ENCODE measurements at regions of chr2 and their contacts with region 1.

Region 1: GRCh38 chr2:173402405-173402974 is 47.8 kb downstream of the CDCA7 start:
- DNase-seq: peak; percentile 85
- H3K4me3 Mint-ChIP-seq: no peak overlapping the region
- H3K27ac Mint-ChIP-seq: no peak overlapping the region
- H3K4me1 Mint-ChIP-seq: peaks cover 6% of the 10 kb centered on the region
- H3K27me3 Mint-ChIP-seq: peaks cover 53% of the 10 kb centered on the region

Region 2: DNA sequence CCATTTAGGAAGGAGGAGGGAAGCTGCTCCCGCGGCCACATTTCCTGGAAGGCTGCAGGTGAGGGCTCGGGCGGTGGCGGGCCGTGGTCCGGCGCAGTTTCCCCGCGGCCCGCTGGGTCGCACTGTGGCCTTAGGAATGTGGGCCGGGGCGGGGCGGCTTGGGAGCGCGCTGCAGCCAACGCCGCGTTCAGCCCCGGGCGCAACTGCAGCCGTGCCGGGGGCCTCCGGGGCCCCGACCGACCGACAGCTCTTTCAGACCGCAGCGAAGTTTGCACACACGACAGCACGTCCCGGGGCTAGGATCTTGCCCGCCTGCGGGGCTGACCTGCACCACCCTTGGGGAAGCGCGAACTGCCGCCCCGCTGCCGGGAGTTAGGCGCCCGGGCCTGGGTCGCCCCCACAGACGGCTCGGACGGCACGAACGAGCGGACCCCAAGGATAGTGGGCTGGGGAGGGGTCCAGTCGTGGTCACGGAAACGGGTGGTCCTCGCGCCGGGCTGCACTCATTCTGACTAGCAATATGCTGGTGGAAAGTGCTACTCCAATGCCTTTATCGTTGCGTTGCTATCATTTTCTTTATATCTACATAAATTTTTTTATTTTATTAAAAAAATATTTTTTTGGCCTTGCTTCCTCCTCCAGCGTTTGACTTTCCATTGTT is 1229.8 kb before region 1 on chr2:
- CTCF ChIA-PET with region 1: no interaction called
- intact Hi-C with region 1: no loop called
- DNase-seq: peak; percentile 72
- H3K4me3 Mint-ChIP-seq: peak overlapping the region; percentile 68
- H3K27ac Mint-ChIP-seq: no peak overlapping the region
- H3K4me1 Mint-ChIP-seq: peaks cover 5% of the 10 kb centered on the region
- H3K27me3 Mint-ChIP-seq: no peaks in the 10 kb centered on the region

Region 3: GRCh38 chr2:172762574-172762973 is 639.9 kb before region 1 on chr2:
- CTCF ChIA-PET with region 1: no interaction called
- intact Hi-C with region 1: no loop called
- DNase-seq: no peak
- H3K4me3 Mint-ChIP-seq: no peak overlapping the region
- H3K27ac Mint-ChIP-seq: no peak overlapping the region
- H3K4me1 Mint-ChIP-seq: no peaks in the 10 kb centered on the region
- H3K27me3 Mint-ChIP-seq: no peaks in the 10 kb centered on the region

Region 4: GRCh38 chr2:173027181-173028128 is 375.0 kb before region 1 on chr2:
- CTCF ChIA-PET with region 1: interaction called, 6 read pairs
- intact Hi-C with region 1: loop called (anchors 1 kb)
- DNase-seq: peak; percentile 90
- H3K4me3 Mint-ChIP-seq: no peak overlapping the region
- H3K27ac Mint-ChIP-seq: no peak overlapping the region
- H3K4me1 Mint-ChIP-seq: no peaks in the 10 kb centered on the region
- H3K27me3 Mint-ChIP-seq: peaks cover 3% of the 10 kb centered on the region

Region 5: GRCh38 chr2:173151671-173152398 is 250.7 kb before region 1 on chr2:
- CTCF ChIA-PET with region 1: no interaction called
- intact Hi-C with region 1: no loop called
- DNase-seq: no peak
- H3K4me3 Mint-ChIP-seq: no peak overlapping the region
- H3K27ac Mint-ChIP-seq: no peak overlapping the region
- H3K4me1 Mint-ChIP-seq: peaks cover 21% of the 10 kb centered on the region
- H3K27me3 Mint-ChIP-seq: peaks cover 16% of the 10 kb centered on the region

Region 6: GRCh38 chr2:173448938-173449471 is 46.5 kb after region 1 on chr2:
- CTCF ChIA-PET with region 1: interaction called, 24 read pairs
- intact Hi-C with region 1: loop called (anchors 1 kb)
- DNase-seq: peak; percentile 82
- H3K4me3 Mint-ChIP-seq: peak overlapping the region; percentile 64
- H3K27ac Mint-ChIP-seq: peak overlapping the region; percentile 39
- H3K4me1 Mint-ChIP-seq: peaks cover 11% of the 10 kb centered on the region
- H3K27me3 Mint-ChIP-seq: peaks cover 4% of the 10 kb centered on the region

Region 7: DNA sequence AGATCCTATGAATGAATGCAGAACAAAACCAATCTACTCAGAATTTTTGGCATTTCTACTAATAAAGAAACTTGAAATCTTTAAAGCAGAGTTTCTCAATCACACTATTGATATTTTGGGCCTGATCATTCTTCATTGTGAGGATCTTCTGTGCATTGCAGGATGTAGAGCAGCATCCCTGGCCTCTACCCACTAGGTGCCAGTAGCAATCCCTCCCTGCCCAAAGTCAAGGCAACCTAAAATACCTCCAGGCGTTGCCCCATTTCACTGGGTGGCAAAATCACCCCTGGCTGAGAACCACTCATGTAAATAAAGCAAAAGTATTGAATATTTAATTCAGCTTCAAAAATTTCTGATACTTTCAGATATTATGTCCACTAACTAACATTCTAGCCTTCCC is 349.7 kb after region 1 on chr2:
- CTCF ChIA-PET with region 1: no interaction called
- intact Hi-C with region 1: loop called (anchors 10 kb)
- DNase-seq: peak; percentile 19
- H3K4me3 Mint-ChIP-seq: no peak overlapping the region
- H3K27ac Mint-ChIP-seq: no peak overlapping the region
- H3K4me1 Mint-ChIP-seq: no peaks in the 10 kb centered on the region
- H3K27me3 Mint-ChIP-seq: peaks cover 7% of the 10 kb centered on the region

Region 8: DNA sequence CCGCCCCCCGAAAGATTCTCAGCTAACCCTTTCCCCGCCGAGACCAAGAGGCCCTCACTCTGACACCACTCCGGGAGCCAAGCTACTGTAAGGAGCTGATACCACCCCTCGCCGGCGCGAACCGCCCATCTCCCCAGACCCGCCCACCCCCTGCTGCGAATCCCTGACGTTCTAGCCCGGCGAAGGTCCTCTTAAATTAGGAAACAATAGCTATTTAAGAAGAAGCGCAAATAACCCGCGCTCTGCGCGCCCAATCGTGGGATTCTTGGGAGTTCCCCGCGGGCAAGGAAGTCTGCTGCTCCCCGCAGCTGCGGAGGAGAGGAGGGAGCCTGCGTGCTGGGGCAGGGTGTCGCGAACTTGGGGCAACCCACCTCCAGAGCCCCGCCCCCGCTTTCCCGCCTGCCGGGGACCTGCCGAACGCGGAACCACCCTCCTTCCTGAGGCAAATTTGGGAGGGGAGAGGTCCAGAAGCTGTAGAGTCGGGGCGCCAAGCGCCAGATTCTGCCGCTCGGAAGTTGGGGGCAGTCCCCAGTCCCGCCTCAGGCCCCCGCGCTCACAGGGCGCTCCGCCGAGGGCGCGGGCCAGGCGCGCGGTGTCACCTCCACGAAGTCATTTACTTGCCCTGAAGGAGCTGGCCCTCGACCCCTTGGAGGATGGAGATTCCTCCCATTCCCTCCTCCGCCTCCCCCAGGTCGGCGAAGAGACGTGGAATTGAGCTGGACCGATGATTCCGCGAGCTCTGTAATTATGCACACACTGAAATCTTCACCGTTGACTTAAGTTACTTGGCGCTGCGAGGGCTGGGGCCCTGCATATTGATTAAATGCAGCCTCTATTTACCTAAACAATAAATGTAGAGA is 923.9 kb after region 1 on chr2:
- CTCF ChIA-PET with region 1: no interaction called
- intact Hi-C with region 1: loop called (anchors 5 kb)
- DNase-seq: peak; percentile 39
- H3K4me3 Mint-ChIP-seq: peak overlapping the region; percentile 70
- H3K27ac Mint-ChIP-seq: no peak overlapping the region
- H3K4me1 Mint-ChIP-seq: peaks cover 25% of the 10 kb centered on the region
- H3K27me3 Mint-ChIP-seq: peaks cover 74% of the 10 kb centered on the region

Measured in activated naive CD4-positive, alpha-beta T cell treated with anti-CD3 and anti-CD28 coated beads for 36 hours (primary cell).